HEK293 (cell line): ENCODE measurements at regions of chr2 and their contacts with region 1.

Region 1: DNA sequence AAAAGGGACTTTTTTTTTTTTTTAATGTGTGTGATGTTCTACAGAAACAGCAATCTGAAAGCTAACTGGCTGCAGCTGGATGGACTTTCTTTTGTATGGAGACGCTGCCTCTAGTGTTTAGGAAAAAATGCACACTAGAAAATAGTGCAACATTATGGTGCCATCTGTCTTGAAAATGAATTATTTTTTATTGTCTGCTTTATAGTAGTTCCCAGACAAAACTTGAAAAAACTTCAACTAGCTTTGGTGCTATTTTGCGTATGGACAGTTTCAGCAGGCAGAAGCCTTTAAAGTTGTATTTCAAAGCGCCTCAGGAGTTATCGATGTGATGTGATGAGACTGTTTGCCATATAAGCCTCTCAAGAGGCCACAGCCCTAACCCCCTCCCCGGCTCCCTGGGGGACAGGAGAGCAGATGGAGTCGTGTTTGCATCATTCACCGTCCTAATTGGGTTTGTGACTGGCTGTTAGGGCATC is 86.9 kb downstream of the LTBP1 start:
- H3K4me3 ChIP-seq: no peak overlapping the region
- H3K27ac ChIP-seq: no peak overlapping the region
- H3K4me1 ChIP-seq: no peaks in the 10 kb centered on the region
- CTCF ChIP-seq: peak; percentile 28; the same call in 1 of the 2 replicates

Region 2: DNA sequence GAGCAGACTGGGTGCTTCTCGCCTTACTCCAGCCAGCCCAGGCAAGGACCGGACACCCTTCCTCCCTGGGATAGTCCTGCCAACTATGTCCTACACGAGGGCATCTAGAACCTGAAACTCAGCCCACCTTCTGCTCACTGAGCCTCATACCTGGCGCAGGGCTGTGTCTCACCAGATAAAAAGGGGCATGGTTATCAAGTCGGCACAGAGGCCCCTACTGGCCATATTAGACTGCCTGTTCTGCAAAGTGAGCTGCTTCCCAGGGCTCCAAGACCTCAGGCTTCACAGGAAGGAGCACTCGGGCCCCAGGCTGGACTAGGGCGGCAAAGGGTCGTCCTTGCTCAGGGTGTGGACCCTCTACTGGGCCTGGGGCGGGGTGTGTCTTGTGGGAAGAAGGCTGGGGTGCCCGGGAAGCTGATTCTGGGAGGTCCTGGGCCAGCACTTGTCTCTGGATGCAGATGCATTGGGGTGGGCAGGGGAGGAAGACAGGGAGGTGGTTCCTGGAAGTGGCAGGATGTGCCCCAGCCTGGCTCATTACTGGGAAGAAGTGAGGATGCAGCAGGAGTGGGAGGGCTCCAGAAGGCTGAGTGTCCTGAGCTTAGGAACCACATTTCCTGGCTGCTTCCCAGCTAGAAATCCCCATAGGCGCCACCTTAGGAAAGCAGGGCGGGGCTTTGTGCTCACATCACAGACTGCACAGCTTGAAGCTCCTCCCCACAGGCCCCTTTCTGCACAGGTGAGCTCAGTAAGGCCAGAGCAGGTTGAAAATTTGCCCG is 1780.1 kb before region 1 on chr2:
- CTCF ChIA-PET with region 1: no interaction called
- POLR2A ChIA-PET with region 1: no interaction called
- H3K4me3 ChIP-seq: no peak overlapping the region
- H3K27ac ChIP-seq: no peak overlapping the region
- H3K4me1 ChIP-seq: 0 out of 2 replicates have a peak, but pooled peaks cover 4% of the 10 kb centered on the region
- CTCF ChIP-seq: no peak

Region 3: GRCh38 chr2:32772638-32773447 is 260.8 kb before region 1 on chr2:
- CTCF ChIA-PET with region 1: interaction called, 44 read pairs
- POLR2A ChIA-PET with region 1: no interaction called
- H3K4me3 ChIP-seq: no peak overlapping the region
- H3K27ac ChIP-seq: no peak overlapping the region
- H3K4me1 ChIP-seq: no peaks in the 10 kb centered on the region
- CTCF ChIP-seq: peak; percentile 56; the same call in 1 of the 2 replicates

Region 4: GRCh38 chr2:33021542-33022227 is 12.0 kb before region 1 on chr2:
- CTCF ChIA-PET with region 1: interaction called, 12 read pairs
- POLR2A ChIA-PET with region 1: no interaction called
- H3K4me3 ChIP-seq: no peak overlapping the region
- H3K27ac ChIP-seq: no peak overlapping the region
- H3K4me1 ChIP-seq: peaks cover 3% of the 10 kb centered on the region; the same call in 1 of the 2 replicates
- CTCF ChIP-seq: no peak

Region 5: DNA sequence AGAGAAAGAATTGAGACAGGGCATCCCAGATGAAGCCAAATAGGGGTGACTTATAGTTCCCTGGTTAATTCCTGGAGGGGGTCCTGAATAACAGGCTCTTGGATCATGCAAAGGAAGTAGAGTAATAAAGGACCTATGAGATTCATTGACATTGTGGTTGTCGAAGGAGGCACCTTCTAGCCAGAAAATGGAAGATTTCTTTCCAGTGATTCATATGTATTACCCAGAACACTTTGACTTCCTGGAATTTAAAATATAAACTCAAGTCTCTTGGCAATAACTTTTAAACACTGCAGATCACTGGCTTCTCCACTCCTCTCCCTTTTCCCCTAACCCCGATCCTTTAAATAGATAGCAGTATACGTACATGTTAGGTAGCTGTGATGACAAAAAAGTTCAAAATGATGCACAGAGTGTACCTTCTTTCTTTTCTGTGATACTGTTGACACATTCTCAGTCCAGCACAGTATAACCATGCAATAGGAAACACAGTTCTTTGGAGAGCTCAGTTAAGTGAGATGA is 124.9 kb after region 1 on chr2:
- CTCF ChIA-PET with region 1: no interaction called
- POLR2A ChIA-PET with region 1: no interaction called
- H3K4me3 ChIP-seq: no peak overlapping the region
- H3K27ac ChIP-seq: no peak overlapping the region
- H3K4me1 ChIP-seq: no peaks in the 10 kb centered on the region
- CTCF ChIP-seq: no peak